WTC11 (cell line): ENCODE measurements at regions of chr11 and their contacts with region 1.

Region 1: DNA sequence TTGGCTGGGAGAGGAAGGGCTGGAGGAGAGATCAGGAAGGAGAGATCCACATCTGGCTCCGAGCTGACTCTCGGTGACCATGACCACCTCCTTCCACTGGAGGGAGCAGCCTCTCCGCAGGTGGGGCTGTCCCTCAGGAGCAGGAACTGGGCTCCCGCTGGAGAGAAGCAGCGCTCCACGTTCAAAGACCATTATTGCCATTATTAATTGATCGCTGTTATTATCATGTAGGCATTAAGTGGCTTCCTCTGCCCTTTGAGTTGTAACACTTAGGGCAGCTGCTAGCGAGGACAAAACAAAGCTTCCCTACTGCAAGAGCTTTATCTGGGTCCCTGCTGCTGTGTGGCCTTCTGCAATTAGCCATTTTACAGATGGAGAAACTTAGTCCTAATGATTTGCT is 251.9 kb downstream of the ST3GAL4 start:
- DNase-seq: peak; percentile 76
- ATAC-seq: peak; percentile 83
- H3K4me3 Mint-ChIP-seq: peak overlapping the region; percentile 42
- H3K27ac Mint-ChIP-seq: no peak overlapping the region
- H3K4me1 Mint-ChIP-seq: peaks cover 40% of the 10 kb centered on the region
- H3K27me3 Mint-ChIP-seq: peaks cover 6% of the 10 kb centered on the region
- CTCF ChIP-seq: peak; percentile 52

Region 2: GRCh38 chr11:126440792-126441514 is 166.4 kb before region 1 on chr11:
- CTCF ChIA-PET with region 1: interaction called, 15 read pairs
- POLR2A ChIA-PET with region 1: no interaction called
- DNase-seq: peak; percentile 95
- ATAC-seq: peak; percentile 85
- H3K4me3 Mint-ChIP-seq: peak overlapping the region; percentile 42
- H3K27ac Mint-ChIP-seq: no peak overlapping the region
- H3K4me1 Mint-ChIP-seq: peaks cover 31% of the 10 kb centered on the region
- H3K27me3 Mint-ChIP-seq: no peaks in the 10 kb centered on the region; the same call in 1 of the 2 replicates
- CTCF ChIP-seq: peak; percentile 95

Region 3: GRCh38 chr11:126538071-126538470 is 69.3 kb before region 1 on chr11:
- CTCF ChIA-PET with region 1: no interaction called
- POLR2A ChIA-PET with region 1: no interaction called
- DNase-seq: no peak
- ATAC-seq: no peak
- H3K4me3 Mint-ChIP-seq: no peak overlapping the region
- H3K27ac Mint-ChIP-seq: no peak overlapping the region; the same call in 1 of the 2 replicates
- H3K4me1 Mint-ChIP-seq: peaks cover 10% of the 10 kb centered on the region
- H3K27me3 Mint-ChIP-seq: no peaks in the 10 kb centered on the region; the same call in 1 of the 2 replicates
- CTCF ChIP-seq: no peak

Region 4: GRCh38 chr11:126585781-126586491 is 21.4 kb before region 1 on chr11:
- CTCF ChIA-PET with region 1: interaction called, 37 read pairs
- POLR2A ChIA-PET with region 1: no interaction called
- DNase-seq: peak; percentile 53
- ATAC-seq: peak; percentile 82
- H3K4me3 Mint-ChIP-seq: no peak overlapping the region
- H3K27ac Mint-ChIP-seq: no peak overlapping the region
- H3K4me1 Mint-ChIP-seq: peaks cover 13% of the 10 kb centered on the region
- H3K27me3 Mint-ChIP-seq: no peaks in the 10 kb centered on the region; the same call in 1 of the 2 replicates
- CTCF ChIP-seq: no peak

Region 5: DNA sequence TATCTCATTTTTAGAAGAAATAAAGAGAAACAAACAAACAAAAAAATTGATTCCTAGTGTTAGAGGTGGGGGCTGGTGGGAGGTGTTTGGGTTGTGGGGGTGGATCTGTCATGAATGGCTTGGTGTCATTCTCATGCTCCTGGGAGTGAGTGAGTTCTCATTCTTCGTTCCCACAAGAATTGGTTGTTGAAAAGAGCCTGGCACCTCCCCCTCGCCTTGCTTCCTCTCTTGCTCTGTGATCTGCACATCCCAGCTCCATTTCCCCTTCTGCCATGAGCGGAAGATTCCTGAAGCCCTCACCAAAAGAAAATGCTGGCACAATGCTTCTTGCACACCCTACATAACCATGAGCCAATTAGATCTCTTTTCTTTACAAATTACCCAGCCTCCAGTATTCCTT is 26.0 kb after region 1 on chr11:
- CTCF ChIA-PET with region 1: interaction called, 12 read pairs
- POLR2A ChIA-PET with region 1: no interaction called
- DNase-seq: no peak
- ATAC-seq: no peak
- H3K4me3 Mint-ChIP-seq: no peak overlapping the region
- H3K27ac Mint-ChIP-seq: no peak overlapping the region
- H3K4me1 Mint-ChIP-seq: peaks cover 70% of the 10 kb centered on the region
- H3K27me3 Mint-ChIP-seq: no peaks in the 10 kb centered on the region
- CTCF ChIP-seq: no peak

Region 6: DNA sequence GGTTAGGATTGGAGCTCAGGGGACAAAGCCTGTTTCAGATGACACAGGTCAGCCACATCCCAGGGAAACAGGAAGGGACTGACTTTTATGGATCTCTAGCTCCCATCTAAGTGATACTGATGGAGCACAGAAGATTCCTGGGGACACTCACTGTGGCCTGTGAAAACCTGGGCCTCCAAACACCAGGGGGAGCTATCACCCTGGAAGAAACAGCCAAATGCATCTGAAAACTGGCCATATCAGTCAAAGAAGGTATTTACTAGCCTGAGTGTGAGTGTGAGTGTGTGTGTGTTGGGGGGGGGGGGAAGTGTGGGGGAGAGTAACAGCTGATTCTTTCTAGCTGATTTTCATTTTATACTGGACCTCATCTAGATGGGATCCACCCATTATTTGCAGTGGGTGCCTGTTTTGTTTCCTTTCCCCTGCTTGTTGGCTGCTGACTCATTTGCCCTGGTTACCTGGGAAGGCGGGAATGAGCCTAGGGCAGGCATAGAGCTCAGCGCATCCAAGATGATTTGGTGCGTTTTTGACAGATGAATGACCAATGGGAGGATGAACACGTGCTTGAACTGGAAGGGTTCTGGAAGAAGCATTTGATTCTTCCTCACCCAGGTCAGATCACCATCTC is 109.2 kb after region 1 on chr11:
- CTCF ChIA-PET with region 1: interaction called, 17 read pairs
- POLR2A ChIA-PET with region 1: no interaction called
- DNase-seq: peak; percentile 74
- ATAC-seq: peak; percentile 79
- H3K4me3 Mint-ChIP-seq: no peak overlapping the region
- H3K27ac Mint-ChIP-seq: no peak overlapping the region
- H3K4me1 Mint-ChIP-seq: peaks cover 24% of the 10 kb centered on the region
- H3K27me3 Mint-ChIP-seq: 0 out of 2 replicates have a peak, but pooled peaks cover 4% of the 10 kb centered on the region
- CTCF ChIP-seq: peak; percentile 56